HEK293 (cell line): ENCODE measurements at regions of chr6 and their contacts with region 1.

Region 1: GRCh38 chr6:63598049-63599036 is 26.1 kb downstream of the LOC128125822 start:
- H3K4me3 ChIP-seq: peak overlapping the region; percentile 60
- H3K27ac ChIP-seq: peak overlapping the region; percentile 13; the same call in 1 of the 2 replicates
- H3K4me1 ChIP-seq: no peaks in the 10 kb centered on the region
- CTCF ChIP-seq: peak; percentile 92

Region 2: DNA sequence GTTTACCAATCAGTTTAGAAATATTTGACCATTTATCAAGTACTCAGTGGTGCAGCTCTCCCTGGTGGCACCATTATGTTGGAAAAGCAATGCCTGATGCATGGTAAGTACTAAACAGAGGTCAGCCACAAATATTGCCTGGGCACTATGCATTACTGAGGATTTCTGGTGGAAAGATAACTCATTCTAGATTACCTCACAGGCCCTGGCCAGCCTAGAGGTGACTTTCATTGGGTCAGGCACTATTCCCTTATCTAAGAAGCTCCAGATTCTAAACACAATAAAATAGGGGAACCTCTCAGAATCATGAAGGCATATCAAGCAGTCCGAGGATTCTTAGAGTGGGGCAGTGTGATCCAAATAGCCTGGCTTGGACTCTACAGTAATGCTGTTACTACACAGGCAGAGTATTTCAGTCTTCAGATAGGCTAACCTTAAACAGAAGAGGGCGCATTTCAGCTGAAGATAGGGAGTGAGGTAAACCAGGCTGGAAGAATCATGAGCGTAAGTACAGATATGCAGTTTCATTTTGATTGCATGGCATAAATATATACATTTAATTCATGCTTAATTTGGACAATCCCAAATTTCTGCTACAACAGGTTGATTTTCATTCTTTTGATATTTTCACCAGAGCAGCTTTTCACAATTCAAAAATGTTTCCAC is 290.6 kb before region 1 on chr6:
- CTCF ChIA-PET with region 1: interaction called, 10 read pairs
- POLR2A ChIA-PET with region 1: no interaction called
- H3K4me3 ChIP-seq: no peak overlapping the region
- H3K27ac ChIP-seq: no peak overlapping the region
- H3K4me1 ChIP-seq: no peaks in the 10 kb centered on the region
- CTCF ChIP-seq: no peak

Region 3: DNA sequence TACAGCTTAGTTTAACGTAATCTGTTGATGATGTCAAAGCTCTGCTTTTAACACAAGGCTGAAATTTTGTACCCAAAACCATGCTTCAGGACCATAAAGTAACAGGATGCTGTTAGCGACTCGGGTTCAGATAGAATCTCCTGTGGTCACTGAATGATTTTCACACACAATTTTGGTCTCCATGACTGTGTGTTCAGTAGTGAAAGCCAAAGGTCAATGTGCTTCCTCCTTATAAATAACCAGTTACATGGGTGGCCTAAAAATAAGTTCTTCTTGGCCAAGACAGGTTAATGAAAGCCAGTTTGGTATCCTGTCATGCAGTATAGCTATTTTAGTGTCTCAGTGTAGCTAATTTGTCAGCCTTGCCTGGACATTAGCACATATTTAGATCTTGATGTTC is 45.1 kb before region 1 on chr6:
- CTCF ChIA-PET with region 1: no interaction called
- POLR2A ChIA-PET with region 1: no interaction called
- H3K4me3 ChIP-seq: no peak overlapping the region
- H3K27ac ChIP-seq: no peak overlapping the region
- H3K4me1 ChIP-seq: no peaks in the 10 kb centered on the region
- CTCF ChIP-seq: no peak

Region 4: GRCh38 chr6:63573140-63573898 is 25.0 kb before region 1 on chr6:
- CTCF ChIA-PET with region 1: interaction called, 17 read pairs
- POLR2A ChIA-PET with region 1: interaction called, 13 read pairs
- H3K4me3 ChIP-seq: peak overlapping the region; percentile 96
- H3K27ac ChIP-seq: peak overlapping the region; percentile 96
- H3K4me1 ChIP-seq: peaks cover 17% of the 10 kb centered on the region; the same call in 1 of the 2 replicates
- CTCF ChIP-seq: no peak; the same call in 1 of the 2 replicates

Region 5: DNA sequence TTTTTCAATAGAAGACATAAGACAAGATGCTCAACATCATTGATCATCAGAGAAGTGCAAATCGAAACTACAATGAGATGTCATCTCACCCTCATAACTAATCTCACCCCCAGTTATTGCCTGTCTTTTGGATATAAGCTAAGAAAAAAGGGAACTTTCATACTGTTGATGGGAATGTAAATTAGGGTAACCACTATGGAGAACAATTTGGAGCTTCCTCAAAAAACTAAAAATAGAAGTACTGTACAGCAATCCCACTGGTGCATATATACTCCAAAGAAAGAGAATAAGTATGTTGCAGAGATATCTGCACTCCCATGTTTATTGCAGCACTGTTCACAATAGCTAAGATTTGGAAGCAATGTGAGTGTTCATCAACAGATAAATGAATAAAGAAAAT is 10.9 kb after region 1 on chr6:
- CTCF ChIA-PET with region 1: interaction called, 42 read pairs
- POLR2A ChIA-PET with region 1: no interaction called
- H3K4me3 ChIP-seq: no peak overlapping the region
- H3K27ac ChIP-seq: no peak overlapping the region
- H3K4me1 ChIP-seq: peaks cover 9% of the 10 kb centered on the region; the same call in 1 of the 2 replicates
- CTCF ChIP-seq: no peak

Region 6: GRCh38 chr6:63635588-63636517 is 37.5 kb after region 1 on chr6 and contains the start of gene PHF3:
- CTCF ChIA-PET with region 1: interaction called, 17 read pairs
- POLR2A ChIA-PET with region 1: interaction called, 18 read pairs
- H3K4me3 ChIP-seq: peak within 1 kb of the TSS; percentile 96
- H3K27ac ChIP-seq: peak within 1 kb of the TSS; percentile 95
- H3K4me1 ChIP-seq: peaks cover 30% of the 10 kb centered on the region
- CTCF ChIP-seq: peak; percentile 98

Region 7: DNA sequence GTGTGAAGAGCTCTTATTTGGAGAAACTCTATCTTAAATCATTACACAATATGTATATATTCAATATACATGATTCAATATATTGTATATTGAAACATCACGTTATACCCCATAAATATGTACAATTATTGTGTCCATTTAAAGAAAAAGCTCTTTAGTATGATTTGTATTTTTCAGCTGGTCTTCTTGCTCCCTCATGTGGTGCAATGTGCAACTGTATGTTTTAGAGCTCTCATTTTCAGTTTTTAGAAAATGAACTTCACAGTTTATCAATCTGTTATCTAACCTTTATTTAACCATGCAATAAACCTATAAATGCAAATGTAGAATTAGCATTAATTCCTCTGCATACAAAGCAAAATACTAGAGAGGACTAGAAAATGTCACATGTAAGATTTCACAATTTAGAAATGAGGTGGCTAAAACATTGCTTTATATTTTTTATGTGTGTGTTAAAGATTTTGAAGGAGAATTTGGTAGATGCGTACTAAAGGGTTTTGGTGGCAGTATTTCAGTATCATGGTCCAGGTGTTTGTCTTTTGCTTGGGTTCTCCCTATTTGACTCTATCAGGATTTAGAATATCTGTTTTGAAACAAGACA is 204.4 kb after region 1 on chr6:
- CTCF ChIA-PET with region 1: interaction called, 19 read pairs
- POLR2A ChIA-PET with region 1: interaction called, 3 read pairs
- H3K4me3 ChIP-seq: no peak overlapping the region
- H3K27ac ChIP-seq: no peak overlapping the region
- H3K4me1 ChIP-seq: peaks cover 9% of the 10 kb centered on the region
- CTCF ChIP-seq: no peak